ENCODE measurements at regions of chr7 and their contacts with region 1.

Region 1: GRCh38 chr7:138029126-138029525 is 27.2 kb upstream of the CREB3L2 start:
- DNase-seq: no peak
- ATAC-seq: no peak
- H3K4me3 ChIP-seq: no peak overlapping the region
- H3K27ac ChIP-seq: no peak overlapping the region
- H3K4me1 ChIP-seq: no peaks in the 10 kb centered on the region
- H3K27me3 ChIP-seq: no peaks in the 10 kb centered on the region
- CTCF ChIP-seq: no peak

Region 2: GRCh38 chr7:138238734-138239659 is 209.9 kb after region 1 on chr7:
- CTCF ChIA-PET with region 1: interaction called, 16 read pairs
- POLR2A ChIA-PET with region 1: no interaction called
- in situ Hi-C with region 1: no loop called
- intact Hi-C with region 1: no loop called
- DNase-seq: no peak
- ATAC-seq: no peak
- H3K4me3 ChIP-seq: no peak overlapping the region
- H3K27ac ChIP-seq: no peak overlapping the region
- H3K4me1 ChIP-seq: no peaks in the 10 kb centered on the region
- H3K27me3 ChIP-seq: no peaks in the 10 kb centered on the region
- CTCF ChIP-seq: no peak

Measured in Panc1 (cell line).